ENCODE measurements at regions of chr2 and their contacts with region 1.

Region 1: GRCh38 chr2:58131191-58132011 is 84.8 kb downstream of the VRK2 start:
- ATAC-seq: peak in 7 of 8 experiments; percentile 18 to 66 (median 49)
- H3K4me3 ChIP-seq: no peak overlapping the region
- H3K27ac ChIP-seq: no peak overlapping the region
- H3K4me1 ChIP-seq: peaks cover 5 to 7% of the 10 kb centered on the region in 2 donors

Region 2: GRCh38 chr2:57809230-57809629 is 322.2 kb before region 1 on chr2:
- in situ Hi-C with region 1: no loop called
- ATAC-seq: no peak
- H3K4me3 ChIP-seq: no peak overlapping the region
- H3K27ac ChIP-seq: no peak overlapping the region
- H3K4me1 ChIP-seq: no peaks in the 10 kb centered on the region

Region 3: DNA sequence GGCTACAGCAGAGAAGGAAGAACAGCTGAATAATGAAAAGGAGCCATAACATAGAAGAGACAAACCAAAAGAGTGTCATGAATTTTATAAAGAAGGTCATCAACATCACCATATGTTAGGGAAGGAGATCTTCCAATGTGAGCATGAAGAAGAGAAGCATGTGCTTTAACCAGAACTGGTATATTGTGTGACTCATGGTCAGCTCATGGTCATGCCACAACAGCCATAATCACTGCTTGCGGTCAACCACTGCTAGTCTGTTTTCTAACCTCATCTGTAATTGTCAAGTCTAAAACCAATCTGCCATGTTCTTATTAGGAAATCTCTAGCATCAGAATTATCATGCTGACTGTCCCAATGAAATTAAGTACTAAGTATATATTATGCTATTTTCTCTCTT is 288.9 kb before region 1 on chr2:
- in situ Hi-C with region 1: no loop called
- ATAC-seq: peak in 2 of 8 experiments; percentile 72 to 84
- H3K4me3 ChIP-seq: no peak overlapping the region
- H3K27ac ChIP-seq: no peak overlapping the region
- H3K4me1 ChIP-seq: no peaks in the 10 kb centered on the region

Region 4: GRCh38 chr2:58448065-58448507 is 316.7 kb after region 1 on chr2:
- in situ Hi-C with region 1: loop called in 2 of 9 experiments (anchors 25 kb)
- ATAC-seq: peak; percentile 47 to 93 (median 82)
- H3K4me3 ChIP-seq: no peak overlapping the region
- H3K27ac ChIP-seq: no peak overlapping the region
- H3K4me1 ChIP-seq: no peaks in the 10 kb centered on the region

Region 5: GRCh38 chr2:58539973-58540372 is 408.6 kb after region 1 on chr2:
- in situ Hi-C with region 1: loop called in 1 of 9 experiments (anchors 25 kb)
- ATAC-seq: peak; percentile 36 to 97 (median 75)
- H3K4me3 ChIP-seq: no peak overlapping the region
- H3K27ac ChIP-seq: no peak overlapping the region
- H3K4me1 ChIP-seq: peaks cover 22 to 53% of the 10 kb centered on the region in 2 donors

Measured in motor neuron (in vitro differentiated cells).